RWPE1 (cell line): ENCODE measurements at regions of chr3 and their contacts with region 1.

Region 1: GRCh38 chr3:42190701-42191462 is 75.1 kb downstream of the CCK start:
- DNase-seq: peak; percentile 38
- H3K27ac ChIP-seq: peak overlapping the region; percentile 18
- CTCF ChIP-seq: peak; percentile 86

Region 2: DNA sequence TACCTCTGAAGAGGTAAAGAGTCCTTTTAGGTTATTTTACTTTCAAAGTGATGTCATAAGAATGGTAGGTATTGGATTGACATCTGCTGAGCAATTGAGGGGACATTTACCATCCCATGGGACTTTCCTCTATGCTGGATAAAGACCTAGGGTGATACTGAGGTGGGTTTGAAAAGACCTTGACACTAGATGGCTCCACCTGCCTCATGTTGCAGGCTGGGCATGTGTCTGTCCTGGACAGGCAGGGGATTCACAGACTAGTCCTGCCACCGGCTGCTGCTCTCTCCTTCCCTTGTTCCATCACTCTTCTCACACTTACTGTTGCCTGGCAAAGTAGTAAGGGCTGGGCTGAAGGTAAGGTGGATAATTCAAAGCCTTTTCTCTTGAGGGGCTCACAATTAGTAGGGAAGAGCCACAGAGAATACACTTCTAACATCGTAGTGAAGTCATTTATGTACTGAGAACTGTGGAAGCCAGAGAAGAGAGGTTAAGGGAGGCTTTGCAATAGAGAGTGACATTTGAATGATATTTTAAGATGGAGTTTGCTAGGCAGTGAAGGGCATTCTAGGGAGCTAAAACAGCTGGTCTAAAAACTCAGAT is 72.0 kb before region 1 on chr3:
- CTCF ChIA-PET with region 1: interaction called, 30 read pairs
- POLR2A ChIA-PET with region 1: no interaction called
- DNase-seq: peak; percentile 57
- H3K27ac ChIP-seq: no peak overlapping the region
- CTCF ChIP-seq: no peak

Region 3: DNA sequence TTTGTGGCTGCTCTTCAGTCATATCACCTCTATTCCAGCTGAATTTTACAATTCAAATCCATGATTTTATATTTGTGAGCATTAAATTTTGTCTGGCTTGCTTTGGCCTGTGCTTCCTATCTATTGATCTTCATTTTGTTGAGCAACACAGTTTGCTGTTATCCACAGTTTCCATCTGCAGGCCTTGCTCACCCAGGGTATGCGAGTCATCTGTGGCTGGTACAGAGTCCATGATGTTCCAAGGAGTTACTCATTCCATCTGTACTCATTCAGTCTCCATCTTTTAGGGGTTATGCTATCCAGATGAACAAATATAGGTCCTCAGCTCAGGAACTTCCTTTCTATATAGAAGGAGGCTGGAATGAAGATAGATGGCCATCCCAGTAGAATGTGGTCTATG is 145.2 kb after region 1 on chr3:
- CTCF ChIA-PET with region 1: no interaction called
- POLR2A ChIA-PET with region 1: no interaction called
- DNase-seq: no peak
- H3K27ac ChIP-seq: no peak overlapping the region
- CTCF ChIP-seq: no peak